T-cell (primary cell): ENCODE measurements at regions of chr17 and their contacts with region 1.

Region 1: GRCh38 chr17:73089322-73090317 is 2.9 kb downstream of the SLC39A11 start:
- DNase-seq: no peak
- ATAC-seq: no peak
- H3K4me3 ChIP-seq: no peak overlapping the region
- H3K4me3 Mint-ChIP-seq: no peak overlapping the region
- H3K27ac ChIP-seq: no peak overlapping the region
- H3K27ac Mint-ChIP-seq: no peak overlapping the region
- H3K4me1 ChIP-seq: peaks cover 4 to 27% of the 10 kb centered on the region in 2 experiments
- H3K4me1 Mint-ChIP-seq: peaks cover 36 to 40% (median 37%) of the 10 kb centered on the region in 3 donors
- H3K27me3 ChIP-seq: no peaks in the 10 kb centered on the region
- H3K27me3 Mint-ChIP-seq: no peaks in the 10 kb centered on the region

Region 2: GRCh38 chr17:73101031-73101430 is 11.4 kb after region 1 on chr17:
- CTCF ChIA-PET with region 1: no interaction called
- POLR2A ChIA-PET with region 1: no interaction called
- DNase-seq: no peak
- ATAC-seq: no peak
- H3K4me3 ChIP-seq: no peak overlapping the region
- H3K4me3 Mint-ChIP-seq: no peak overlapping the region
- H3K27ac ChIP-seq: no peak overlapping the region
- H3K27ac Mint-ChIP-seq: no peak overlapping the region
- H3K4me1 ChIP-seq: no peaks in the 10 kb centered on the region
- H3K4me1 Mint-ChIP-seq: no peaks in the 10 kb centered on the region
- H3K27me3 ChIP-seq: peaks cover 0 to 22% of the 10 kb centered on the region in 2 experiments
- H3K27me3 Mint-ChIP-seq: peaks cover 11 to 21% of the 10 kb centered on the region in 2 donors

Region 3: GRCh38 chr17:73118951-73119391 is 29.4 kb after region 1 on chr17:
- CTCF ChIA-PET with region 1: no interaction called
- POLR2A ChIA-PET with region 1: no interaction called
- DNase-seq: no peak
- ATAC-seq: no peak
- H3K4me3 ChIP-seq: no peak overlapping the region
- H3K4me3 Mint-ChIP-seq: no peak overlapping the region
- H3K27ac ChIP-seq: no peak overlapping the region
- H3K27ac Mint-ChIP-seq: no peak overlapping the region
- H3K4me1 ChIP-seq: no peaks in the 10 kb centered on the region
- H3K4me1 Mint-ChIP-seq: no peaks in the 10 kb centered on the region
- H3K27me3 ChIP-seq: peaks cover 0 to 1% of the 10 kb centered on the region in 2 experiments
- H3K27me3 Mint-ChIP-seq: peaks cover 0 to 4% of the 10 kb centered on the region in 2 donors

Region 4: GRCh38 chr17:73226556-73227172 is 137.0 kb after region 1 on chr17:
- CTCF ChIA-PET with region 1: interaction called in 1 of 2 experiments, 10 read pairs
- POLR2A ChIA-PET with region 1: no interaction called
- DNase-seq: no peak
- ATAC-seq: no peak
- H3K4me3 ChIP-seq: no peak overlapping the region
- H3K4me3 Mint-ChIP-seq: peak overlapping the region in 1 of 3 donors; percentile 13
- H3K27ac ChIP-seq: no peak overlapping the region
- H3K27ac Mint-ChIP-seq: peak overlapping the region; percentile 25 to 64
- H3K4me1 ChIP-seq: peaks cover 2 to 40% of the 10 kb centered on the region in 2 experiments
- H3K4me1 Mint-ChIP-seq: peaks cover 60 to 69% (median 67%) of the 10 kb centered on the region in 3 donors
- H3K27me3 ChIP-seq: no peaks in the 10 kb centered on the region
- H3K27me3 Mint-ChIP-seq: no peaks in the 10 kb centered on the region